Sigmoid colon (tissue), 7 donors: ENCODE measurements at regions of chr4 and their contacts with region 1.

Region 1: GRCh38 chr4:52659001-52659721 is at the start of gene USP46:
- DNase-seq: peak; percentile 86
- H3K4me3 ChIP-seq: peak within 1 kb of the TSS; percentile 69 to 95 (median 84)
- H3K27ac ChIP-seq: peak within 1 kb of the TSS; percentile 95 to 98 (median 96)
- H3K4me1 ChIP-seq: peaks cover 0 to 28% (median 18%) of the 10 kb centered on the region in 4 donors
- H3K27me3 ChIP-seq: no peaks in the 10 kb centered on the region
- CTCF ChIP-seq: no peak
- EP300 ChIP-seq: no peak
- POLR2A ChIP-seq: no peak
- total RNA-seq, gene USP46: 5.0 to 9.1 (median 6.0) TPM

Region 2: DNA sequence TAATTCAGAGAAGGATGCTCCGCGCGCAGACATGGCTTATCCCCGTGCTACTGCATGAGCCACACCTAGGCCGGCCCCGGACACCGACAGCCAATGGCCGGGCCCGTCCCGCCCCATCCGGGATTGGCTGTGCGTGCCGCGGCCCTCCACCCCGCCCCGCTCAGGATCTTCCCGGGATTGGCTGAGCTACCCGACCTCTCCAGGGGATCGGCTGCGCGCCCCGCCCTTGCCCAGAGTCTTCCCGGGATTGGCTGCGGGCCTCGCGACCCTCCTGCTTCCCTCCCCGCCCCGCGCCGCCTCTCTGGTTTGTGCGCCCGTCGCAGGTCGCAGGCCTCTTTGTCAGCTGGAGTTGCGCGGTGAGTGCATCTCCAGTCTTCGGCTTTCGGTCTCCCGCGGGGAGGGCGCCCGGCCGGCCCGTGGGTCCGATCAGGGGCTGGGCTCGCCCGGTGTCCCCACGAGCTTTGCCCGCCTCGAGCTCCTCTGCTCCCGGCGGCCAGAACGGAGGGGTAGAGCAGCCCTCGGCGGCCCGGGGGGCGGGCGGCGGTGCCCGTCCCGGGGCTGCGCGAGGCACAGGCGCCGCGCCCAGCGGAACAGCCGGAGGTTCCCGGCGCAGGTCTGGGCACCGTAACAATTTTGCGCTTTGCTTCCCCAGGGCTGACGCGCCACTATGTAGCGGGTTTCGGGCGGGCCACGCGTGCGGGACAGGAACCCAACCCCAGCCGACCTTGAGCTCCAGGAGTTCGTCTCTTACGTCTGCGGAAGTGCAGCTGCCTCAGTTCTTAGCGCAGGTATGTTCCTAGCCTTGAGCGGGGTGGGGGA is 53.2 kb after region 1 on chr4:
- intact Hi-C with region 1: loop called (anchors 2 kb)
- DNase-seq: peak; percentile 99
- H3K4me3 ChIP-seq: peak overlapping the region; percentile 58 to 94 (median 80)
- H3K27ac ChIP-seq: peak overlapping the region; percentile 88 to 94 (median 92)
- H3K4me1 ChIP-seq: peaks cover 0 to 23% (median 15%) of the 10 kb centered on the region in 4 donors
- H3K27me3 ChIP-seq: no peaks in the 10 kb centered on the region
- CTCF ChIP-seq: no peak
- EP300 ChIP-seq: peak in 1 of 4 donors; percentile 21
- POLR2A ChIP-seq: peak; percentile 76 to 81

Region 3: DNA sequence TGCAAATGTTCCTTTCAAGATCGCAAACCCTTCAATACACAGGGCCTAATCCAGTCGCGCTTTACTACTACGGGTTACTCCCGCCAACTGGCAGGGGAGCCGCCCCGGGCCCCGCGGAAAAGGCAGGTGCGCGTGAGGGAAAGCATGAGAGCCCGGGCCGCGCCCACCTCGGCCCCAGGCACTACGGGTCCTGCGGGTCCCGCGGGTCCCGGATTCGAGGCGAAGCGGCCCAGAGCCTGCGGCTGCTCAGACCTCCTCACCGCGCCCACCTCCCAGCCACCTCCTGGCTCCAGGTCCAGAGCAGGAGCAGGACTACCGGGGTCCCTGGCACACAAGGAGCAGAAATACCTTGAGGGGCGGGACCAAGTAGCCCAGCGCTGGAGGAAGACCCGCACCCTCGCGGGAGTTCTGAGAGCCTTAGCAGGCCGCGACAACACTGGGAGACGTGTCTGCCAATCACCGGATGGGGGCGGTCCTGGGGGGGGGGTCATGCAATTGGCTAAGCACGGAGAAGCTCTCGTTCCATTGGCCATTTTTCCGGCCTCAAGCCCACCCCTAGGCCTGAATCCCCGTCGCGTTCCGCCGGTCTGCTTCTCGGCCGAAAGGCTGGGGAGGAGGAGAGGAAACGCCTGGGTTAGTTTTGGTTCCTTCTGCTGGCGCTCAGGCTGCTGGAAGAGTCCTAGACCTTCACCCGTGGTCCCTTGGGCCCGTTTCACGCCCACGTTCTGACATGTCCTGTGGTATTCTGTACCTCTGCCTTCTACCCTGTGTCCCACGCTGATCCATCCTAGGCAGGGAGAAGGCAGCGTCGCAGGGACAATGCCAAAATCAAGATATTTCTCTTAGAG is 63.0 kb after region 1 on chr4:
- intact Hi-C with region 1: loop called (anchors 2 kb)
- DNase-seq: peak; percentile 97
- H3K4me3 ChIP-seq: peak overlapping the region; percentile 79 to 88 (median 82)
- H3K27ac ChIP-seq: peak overlapping the region; percentile 88 to 92 (median 90)
- H3K4me1 ChIP-seq: peaks cover 0 to 14% (median 3%) of the 10 kb centered on the region in 4 donors
- H3K27me3 ChIP-seq: no peaks in the 10 kb centered on the region
- CTCF ChIP-seq: no peak
- EP300 ChIP-seq: no peak
- POLR2A ChIP-seq: peak; percentile 64 to 76

Region 4: GRCh38 chr4:52861879-52862616 is 202.9 kb after region 1 on chr4 and contains the start of gene RASL11B:
- intact Hi-C with region 1: loop called (anchors 5 kb)
- DNase-seq: peak; percentile 87
- H3K4me3 ChIP-seq: peak within 1 kb of the TSS; percentile 44 to 75 (median 65)
- H3K27ac ChIP-seq: peak within 1 kb of the TSS; percentile 45 to 69 (median 58)
- H3K4me1 ChIP-seq: peaks cover 0 to 27% (median 22%) of the 10 kb centered on the region in 4 donors
- H3K27me3 ChIP-seq: peaks cover 0 to 11% (median 6%) of the 10 kb centered on the region in 3 donors
- CTCF ChIP-seq: peak in 2 of 4 experiments; percentile 20 to 25
- EP300 ChIP-seq: no peak
- POLR2A ChIP-seq: no peak
- total RNA-seq, gene RASL11B: 0.36 to 2.2 (median 0.60) TPM